B cell (primary cell): ENCODE measurements at regions of chr1 and their contacts with region 1.

Region 1: DNA sequence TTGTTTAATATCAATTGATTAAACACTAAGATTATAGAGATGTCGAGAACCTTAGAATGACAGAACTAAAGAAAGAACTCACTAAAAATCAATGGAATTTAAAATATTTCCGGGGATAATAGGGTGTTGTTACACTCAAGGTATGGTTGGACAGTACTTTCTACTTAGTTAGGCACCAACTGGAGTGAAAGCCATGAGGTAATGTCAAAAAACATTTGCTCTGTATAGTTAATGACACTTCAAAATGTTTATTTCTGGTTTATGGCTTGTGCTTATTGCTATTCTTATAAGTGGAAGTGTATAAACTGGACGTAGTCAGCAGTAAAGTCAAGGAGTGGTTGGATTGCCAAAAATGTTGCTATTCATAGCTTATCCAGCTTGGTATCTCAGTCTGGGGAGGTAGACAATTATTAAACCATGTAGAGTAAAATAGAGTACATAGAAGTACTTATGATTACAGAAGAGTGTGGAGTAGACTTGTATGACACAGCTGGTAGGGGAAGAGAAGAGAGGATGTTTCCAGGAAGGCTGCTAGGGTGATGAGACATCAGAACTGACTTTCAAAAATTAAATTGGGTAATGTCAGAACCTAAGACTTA is 56.5 kb upstream of the BMP8A start:
- DNase-seq: no peak
- ATAC-seq: no peak
- H3K4me3 ChIP-seq: no peak overlapping the region
- H3K4me3 Mint-ChIP-seq: no peak overlapping the region
- H3K27ac ChIP-seq: no peak overlapping the region
- H3K27ac Mint-ChIP-seq: no peak overlapping the region
- H3K4me1 ChIP-seq: no peaks in the 10 kb centered on the region
- H3K4me1 Mint-ChIP-seq: no peaks in the 10 kb centered on the region
- H3K27me3 ChIP-seq: no peaks in the 10 kb centered on the region
- H3K27me3 Mint-ChIP-seq: no peaks in the 10 kb centered on the region
- CTCF ChIP-seq: no peak

Region 2: DNA sequence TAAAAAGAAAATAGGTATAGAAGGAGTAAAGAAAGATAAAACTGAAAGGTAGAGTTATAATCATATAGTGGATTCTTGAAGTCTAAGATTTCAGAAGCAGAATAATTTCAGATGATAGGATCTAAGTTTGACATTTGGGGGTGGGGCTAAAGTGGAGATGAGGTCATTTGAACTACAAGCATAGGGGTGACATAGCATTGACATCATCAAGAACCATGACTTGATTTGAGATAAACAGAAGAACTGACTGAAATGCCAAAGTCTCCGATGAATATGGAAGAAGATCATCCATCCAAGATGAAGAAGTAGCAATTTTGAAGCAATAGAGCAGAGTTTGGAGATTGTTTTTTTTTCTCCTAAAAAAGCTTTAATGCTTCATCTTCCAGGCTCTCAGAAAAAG is 108.1 kb before region 1 on chr1:
- CTCF ChIA-PET with region 1: no interaction called
- POLR2A ChIA-PET with region 1: no interaction called
- intact Hi-C with region 1: loop called (anchors 10 kb)
- DNase-seq: no peak
- ATAC-seq: no peak
- H3K4me3 ChIP-seq: no peak overlapping the region
- H3K4me3 Mint-ChIP-seq: no peak overlapping the region
- H3K27ac ChIP-seq: no peak overlapping the region
- H3K27ac Mint-ChIP-seq: no peak overlapping the region
- H3K4me1 ChIP-seq: no peaks in the 10 kb centered on the region
- H3K4me1 Mint-ChIP-seq: no peaks in the 10 kb centered on the region
- H3K27me3 ChIP-seq: no peaks in the 10 kb centered on the region
- H3K27me3 Mint-ChIP-seq: no peaks in the 10 kb centered on the region
- CTCF ChIP-seq: no peak